ENCODE measurements at regions of chr6 and their contacts with region 1.

Region 1: GRCh38 chr6:26216356-26216885 is 129.2 kb downstream of the HFE start:
- DNase-seq: peak; percentile 61 to 96 (median 73)
- ATAC-seq: peak; percentile 79
- H3K4me3 ChIP-seq: peak overlapping the region; percentile 71 to 74
- H3K4me3 Mint-ChIP-seq: no peak overlapping the region
- H3K27ac ChIP-seq: peak overlapping the region; percentile 82 to 91
- H3K27ac Mint-ChIP-seq: no peak overlapping the region
- H3K4me1 ChIP-seq: peaks cover 19% of the 10 kb centered on the region
- H3K4me1 Mint-ChIP-seq: peaks cover 14% of the 10 kb centered on the region
- H3K27me3 ChIP-seq: no peaks in the 10 kb centered on the region
- H3K27me3 Mint-ChIP-seq: no peaks in the 10 kb centered on the region
- CTCF ChIP-seq: no peak

Region 2: DNA sequence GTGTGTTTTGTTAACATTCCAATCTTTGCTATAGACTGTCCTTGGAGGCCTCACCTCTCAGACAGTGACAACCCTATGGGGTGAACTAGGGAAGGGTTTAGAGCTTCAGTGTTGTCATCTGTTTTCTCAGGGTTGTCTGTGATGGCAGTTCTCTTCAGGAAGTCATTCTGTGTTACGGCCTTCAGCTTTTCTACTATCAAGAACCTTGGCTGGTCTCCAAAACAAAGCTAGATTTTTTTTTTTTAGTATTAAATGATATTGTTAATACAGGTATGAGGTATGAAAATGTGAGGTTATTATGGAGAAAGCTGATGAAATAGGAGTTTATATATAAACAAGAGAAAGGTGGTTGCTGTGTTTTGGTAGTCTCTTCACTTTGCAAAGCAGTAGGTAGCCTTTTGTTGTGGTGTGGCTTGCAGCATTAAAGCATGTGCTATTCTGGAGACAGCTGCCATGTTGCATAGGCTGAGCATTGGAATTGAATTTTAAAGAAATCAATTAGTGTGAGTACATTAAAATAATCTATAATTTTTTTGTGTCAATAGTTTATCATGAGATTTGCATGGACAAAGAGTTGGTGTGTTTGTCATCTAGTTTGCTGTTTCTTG is 774.7 kb before region 1 on chr6:
- CTCF ChIA-PET with region 1: no interaction called
- POLR2A ChIA-PET with region 1: no interaction called
- intact Hi-C with region 1: no loop called
- DNase-seq: peak in 3 of 9 experiments; percentile 32 to 64 (median 33)
- ATAC-seq: peak; percentile 91
- H3K4me3 ChIP-seq: no peak overlapping the region
- H3K4me3 Mint-ChIP-seq: no peak overlapping the region
- H3K27ac ChIP-seq: peak overlapping the region; percentile 44 to 55
- H3K27ac Mint-ChIP-seq: peak overlapping the region; percentile 93
- H3K4me1 ChIP-seq: peaks cover 24% of the 10 kb centered on the region
- H3K4me1 Mint-ChIP-seq: peaks cover 32% of the 10 kb centered on the region
- H3K27me3 ChIP-seq: no peaks in the 10 kb centered on the region
- H3K27me3 Mint-ChIP-seq: no peaks in the 10 kb centered on the region
- CTCF ChIP-seq: no peak

Region 3: DNA sequence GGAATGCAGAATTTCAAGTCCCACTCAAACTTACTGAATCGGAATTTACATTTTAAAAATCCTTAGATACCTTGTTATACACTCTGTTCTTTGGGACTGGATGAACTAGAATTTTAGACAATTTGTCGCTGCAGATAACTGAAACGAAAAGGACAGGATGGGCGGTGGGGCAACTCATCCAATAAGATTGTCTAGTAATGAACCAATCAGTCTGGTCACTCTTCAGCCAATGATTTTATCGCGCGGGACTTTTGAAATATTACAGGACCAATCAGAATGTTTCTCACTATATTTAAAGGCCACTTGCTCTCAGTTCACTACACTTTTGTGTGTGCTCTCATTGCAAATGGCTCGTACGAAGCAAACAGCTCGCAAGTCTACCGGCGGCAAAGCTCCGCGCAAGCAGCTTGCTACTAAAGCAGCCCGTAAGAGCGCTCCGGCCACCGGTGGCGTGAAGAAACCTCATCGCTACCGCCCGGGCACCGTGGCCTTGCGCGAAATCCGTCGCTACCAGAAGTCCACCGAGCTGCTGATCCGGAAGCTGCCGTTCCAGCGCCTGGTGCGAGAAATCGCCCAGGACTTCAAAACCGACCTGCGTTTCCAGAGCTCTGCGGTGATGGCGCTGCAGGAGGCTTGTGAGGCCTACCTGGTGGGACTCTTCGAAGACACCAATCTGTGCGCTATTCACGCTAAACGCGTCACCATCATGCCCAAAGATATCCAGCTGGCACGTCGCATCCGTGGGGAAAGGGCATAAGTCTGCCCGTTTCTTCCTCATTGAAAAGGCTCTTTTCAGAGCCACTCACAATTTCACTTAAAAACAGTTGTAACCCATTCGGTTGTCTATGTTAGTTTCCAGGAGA is 171.1 kb before region 1 on chr6:
- CTCF ChIA-PET with region 1: no interaction called
- POLR2A ChIA-PET with region 1: interaction called, 42 read pairs
- intact Hi-C with region 1: no loop called
- DNase-seq: peak; percentile 54 to 93 (median 79)
- ATAC-seq: peak; percentile 59
- H3K4me3 ChIP-seq: peak overlapping the region; percentile 67 to 76
- H3K4me3 Mint-ChIP-seq: peak overlapping the region; percentile 89
- H3K27ac ChIP-seq: peak overlapping the region; percentile 73 to 81
- H3K27ac Mint-ChIP-seq: peak overlapping the region; percentile 98
- H3K4me1 ChIP-seq: peaks cover 7% of the 10 kb centered on the region
- H3K4me1 Mint-ChIP-seq: peaks cover 14% of the 10 kb centered on the region
- H3K27me3 ChIP-seq: no peaks in the 10 kb centered on the region
- H3K27me3 Mint-ChIP-seq: no peaks in the 10 kb centered on the region
- CTCF ChIP-seq: no peak

Region 4: DNA sequence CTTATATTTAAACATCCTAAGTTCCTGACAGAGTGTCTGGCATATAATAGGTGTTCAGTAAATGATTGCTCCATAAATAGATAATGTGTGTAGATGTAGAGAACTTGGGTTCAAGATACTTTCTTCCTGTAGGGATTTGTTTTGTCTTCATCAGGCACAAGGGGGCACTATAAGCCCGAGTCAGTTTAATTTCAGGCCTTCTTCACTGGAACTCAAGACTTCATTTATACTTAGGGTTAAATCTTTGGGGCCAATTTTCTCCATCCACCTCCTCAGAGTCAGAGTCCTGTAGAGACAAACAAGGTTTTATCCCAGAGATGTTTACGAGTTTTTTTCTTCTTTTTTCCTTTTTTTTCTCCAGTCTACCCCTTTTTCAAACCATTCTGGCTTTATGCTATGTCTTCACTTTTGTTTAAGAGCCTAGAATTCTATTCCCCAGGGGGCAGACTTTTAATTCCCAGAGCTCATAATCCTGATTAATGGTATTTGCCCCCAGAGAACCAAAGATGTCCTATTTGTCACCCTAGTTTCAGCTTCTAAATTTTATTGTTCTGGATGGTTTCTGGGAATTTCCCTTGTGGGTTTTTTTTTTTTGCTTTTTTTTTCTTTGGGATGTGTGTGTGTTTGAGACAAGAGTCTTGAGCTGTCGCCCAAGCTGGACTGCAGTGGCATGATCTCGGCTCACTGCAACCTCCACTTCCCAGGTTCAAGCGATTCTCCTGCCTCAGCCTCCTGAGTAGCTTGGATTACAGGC is 40.8 kb before region 1 on chr6:
- CTCF ChIA-PET with region 1: interaction called, 8 read pairs
- POLR2A ChIA-PET with region 1: interaction called, 53 read pairs
- intact Hi-C with region 1: loop called in 1 of 2 experiments (anchors 1 kb)
- DNase-seq: peak in 7 of 9 experiments; percentile 33 to 87 (median 53)
- ATAC-seq: no peak
- H3K4me3 ChIP-seq: no peak overlapping the region
- H3K4me3 Mint-ChIP-seq: peak overlapping the region; percentile 3
- H3K27ac ChIP-seq: no peak overlapping the region
- H3K27ac Mint-ChIP-seq: peak overlapping the region; percentile 63
- H3K4me1 ChIP-seq: peaks cover 26% of the 10 kb centered on the region
- H3K4me1 Mint-ChIP-seq: peaks cover 39% of the 10 kb centered on the region
- H3K27me3 ChIP-seq: no peaks in the 10 kb centered on the region
- H3K27me3 Mint-ChIP-seq: no peaks in the 10 kb centered on the region
- CTCF ChIP-seq: peak; percentile 93

Region 5: GRCh38 chr6:26240154-26241032 is 24.0 kb after region 1 on chr6:
- CTCF ChIA-PET with region 1: interaction called, 22 read pairs
- POLR2A ChIA-PET with region 1: interaction called, 450 read pairs
- intact Hi-C with region 1: loop called in 1 of 2 experiments (anchors 2 kb)
- DNase-seq: peak; percentile 40 to 93 (median 67)
- ATAC-seq: peak; percentile 81
- H3K4me3 ChIP-seq: peak overlapping the region; percentile 50 to 62
- H3K4me3 Mint-ChIP-seq: peak overlapping the region; percentile 88
- H3K27ac ChIP-seq: peak overlapping the region; percentile 74 to 88
- H3K27ac Mint-ChIP-seq: peak overlapping the region; percentile 98
- H3K4me1 ChIP-seq: peaks cover 8% of the 10 kb centered on the region
- H3K4me1 Mint-ChIP-seq: peaks cover 21% of the 10 kb centered on the region
- H3K27me3 ChIP-seq: no peaks in the 10 kb centered on the region
- H3K27me3 Mint-ChIP-seq: no peaks in the 10 kb centered on the region
- CTCF ChIP-seq: no peak

Region 6: GRCh38 chr6:26285143-26286134 is 69.0 kb after region 1 on chr6:
- CTCF ChIA-PET with region 1: no interaction called
- POLR2A ChIA-PET with region 1: interaction called, 77 read pairs
- intact Hi-C with region 1: loop called (anchors 1 kb)
- DNase-seq: peak; percentile 83 to 99 (median 96)
- ATAC-seq: peak; percentile 82
- H3K4me3 ChIP-seq: peak overlapping the region; percentile 73 to 76
- H3K4me3 Mint-ChIP-seq: peak overlapping the region; percentile 91
- H3K27ac ChIP-seq: peak overlapping the region; percentile 89 to 96
- H3K27ac Mint-ChIP-seq: peak overlapping the region; percentile 97
- H3K4me1 ChIP-seq: peaks cover 14% of the 10 kb centered on the region
- H3K4me1 Mint-ChIP-seq: peaks cover 31% of the 10 kb centered on the region
- H3K27me3 ChIP-seq: no peaks in the 10 kb centered on the region
- H3K27me3 Mint-ChIP-seq: no peaks in the 10 kb centered on the region
- CTCF ChIP-seq: no peak

Region 7: DNA sequence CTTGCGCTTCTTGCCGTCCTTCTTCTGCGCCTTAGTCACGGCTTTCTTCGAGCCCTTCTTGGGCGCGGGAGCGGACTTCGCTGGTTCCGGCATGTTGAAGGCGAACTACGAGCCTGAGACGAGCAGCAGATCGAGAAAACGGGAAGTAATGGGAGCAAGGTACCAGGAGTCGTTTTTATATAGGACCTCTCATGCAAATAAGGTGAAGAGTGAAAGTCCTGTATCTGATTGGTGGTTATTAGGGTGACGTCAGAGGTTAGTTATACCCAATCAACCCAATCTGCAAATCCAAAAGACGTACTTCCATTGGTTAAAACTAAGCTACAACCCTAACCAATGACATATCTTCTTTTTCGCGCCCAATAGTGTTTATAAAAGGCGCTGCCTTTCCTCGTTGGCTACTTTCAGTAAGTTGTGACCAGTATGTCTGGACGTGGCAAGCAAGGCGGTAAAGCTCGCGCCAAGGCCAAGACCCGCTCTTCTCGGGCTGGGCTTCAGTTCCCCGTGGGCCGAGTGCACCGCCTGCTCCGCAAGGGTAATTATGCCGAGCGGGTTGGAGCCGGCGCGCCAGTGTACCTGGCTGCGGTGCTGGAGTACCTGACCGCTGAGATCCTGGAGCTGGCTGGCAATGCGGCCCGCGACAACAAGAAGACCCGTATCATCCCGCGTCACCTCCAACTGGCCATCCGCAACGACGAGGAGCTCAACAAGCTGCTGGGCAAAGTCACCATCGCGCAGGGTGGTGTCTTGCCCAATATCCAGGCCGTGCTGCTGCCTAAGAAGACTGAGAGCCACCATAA is 930.5 kb after region 1 on chr6:
- CTCF ChIA-PET with region 1: no interaction called
- POLR2A ChIA-PET with region 1: interaction called, 14 read pairs
- intact Hi-C with region 1: no loop called
- DNase-seq: peak; percentile 56 to 98 (median 74)
- ATAC-seq: peak; percentile 85
- H3K4me3 ChIP-seq: peak overlapping the region; percentile 71 to 77
- H3K4me3 Mint-ChIP-seq: no peak overlapping the region
- H3K27ac ChIP-seq: peak overlapping the region; percentile 84 to 91
- H3K27ac Mint-ChIP-seq: no peak overlapping the region
- H3K4me1 ChIP-seq: peaks cover 11% of the 10 kb centered on the region
- H3K4me1 Mint-ChIP-seq: peaks cover 13% of the 10 kb centered on the region
- H3K27me3 ChIP-seq: no peaks in the 10 kb centered on the region
- H3K27me3 Mint-ChIP-seq: no peaks in the 10 kb centered on the region
- CTCF ChIP-seq: no peak